CD4-positive, alpha-beta T cell (primary cell): ENCODE measurements at regions of chr12 and their contacts with region 1.

Region 1: DNA sequence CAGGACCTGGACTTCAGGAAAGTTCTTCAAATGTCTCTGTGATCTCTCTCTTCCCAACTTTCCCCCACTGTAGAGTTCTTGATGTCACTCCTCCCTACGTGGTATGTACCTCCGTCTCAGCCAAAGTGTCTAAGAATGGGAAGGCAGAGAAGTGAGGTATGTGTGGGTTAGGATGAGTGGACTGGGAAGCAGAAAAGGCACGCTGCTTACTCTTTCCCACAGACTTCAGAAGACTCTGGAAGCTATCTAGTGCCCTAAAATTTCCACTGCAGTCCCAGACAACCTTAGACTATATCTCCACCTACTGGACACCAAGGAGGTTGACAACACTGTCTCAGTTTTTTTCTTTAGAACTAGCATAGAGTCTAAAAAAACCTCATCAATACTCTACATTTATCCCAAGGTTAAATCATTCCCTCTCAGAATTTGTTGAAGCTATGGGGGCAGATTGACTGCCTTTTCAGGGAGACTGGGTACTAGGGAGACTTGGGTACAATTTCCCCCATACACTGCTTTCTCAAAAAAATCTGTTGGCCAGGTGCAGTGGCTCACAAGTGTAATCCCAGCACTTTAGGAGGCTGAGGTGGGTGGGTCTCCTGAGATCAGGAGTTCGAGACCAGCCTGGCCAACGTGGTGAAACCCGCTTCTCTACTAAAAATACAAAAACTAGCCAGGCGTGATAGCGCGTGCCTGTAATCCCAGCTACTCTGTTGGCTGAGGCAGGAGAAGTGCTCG is 20.6 kb upstream of the ITGA5 start:
- DNase-seq: peak in 3 of 14 experiments; percentile 61 to 76 (median 75)
- ATAC-seq: peak; percentile 97
- H3K4me3 ChIP-seq: no peak overlapping the region
- H3K4me3 Mint-ChIP-seq: no peak overlapping the region
- H3K27ac ChIP-seq: no peak overlapping the region
- H3K27ac Mint-ChIP-seq: no peak overlapping the region
- H3K4me1 ChIP-seq: peaks cover 4% of the 10 kb centered on the region
- H3K4me1 Mint-ChIP-seq: peaks cover 5% of the 10 kb centered on the region
- H3K27me3 ChIP-seq: no peaks in the 10 kb centered on the region
- H3K27me3 Mint-ChIP-seq: peaks cover 6% of the 10 kb centered on the region
- CTCF ChIP-seq: peak; percentile 87

Region 2: GRCh38 chr12:54285150-54286041 is 154.3 kb before region 1 on chr12:
- CTCF ChIA-PET with region 1: no interaction called
- POLR2A ChIA-PET with region 1: no interaction called
- intact Hi-C with region 1: loop called in 1 of 2 experiments (anchors 5 kb)
- DNase-seq: no peak
- ATAC-seq: no peak
- H3K4me3 ChIP-seq: no peak overlapping the region
- H3K4me3 Mint-ChIP-seq: peak overlapping the region; percentile 68
- H3K27ac ChIP-seq: no peak overlapping the region
- H3K27ac Mint-ChIP-seq: peak overlapping the region; percentile 41
- H3K4me1 ChIP-seq: peaks cover 41% of the 10 kb centered on the region
- H3K4me1 Mint-ChIP-seq: no peaks in the 10 kb centered on the region
- H3K27me3 ChIP-seq: no peaks in the 10 kb centered on the region
- H3K27me3 Mint-ChIP-seq: no peaks in the 10 kb centered on the region
- CTCF ChIP-seq: peak; percentile 40

Region 3: GRCh38 chr12:54404061-54405004 is 35.4 kb before region 1 on chr12:
- CTCF ChIA-PET with region 1: interaction called, 153 read pairs
- POLR2A ChIA-PET with region 1: interaction called, 61 read pairs
- intact Hi-C with region 1: loop called (anchors 1 kb)
- DNase-seq: peak; percentile 55 to 85 (median 64)
- ATAC-seq: peak; percentile 68
- H3K4me3 ChIP-seq: no peak overlapping the region
- H3K4me3 Mint-ChIP-seq: no peak overlapping the region
- H3K27ac ChIP-seq: peak overlapping the region; percentile 29 to 52
- H3K27ac Mint-ChIP-seq: peak overlapping the region; percentile 86
- H3K4me1 ChIP-seq: peaks cover 46% of the 10 kb centered on the region
- H3K4me1 Mint-ChIP-seq: peaks cover 50% of the 10 kb centered on the region
- H3K27me3 ChIP-seq: no peaks in the 10 kb centered on the region
- H3K27me3 Mint-ChIP-seq: no peaks in the 10 kb centered on the region
- CTCF ChIP-seq: peak; percentile 99

Region 4: DNA sequence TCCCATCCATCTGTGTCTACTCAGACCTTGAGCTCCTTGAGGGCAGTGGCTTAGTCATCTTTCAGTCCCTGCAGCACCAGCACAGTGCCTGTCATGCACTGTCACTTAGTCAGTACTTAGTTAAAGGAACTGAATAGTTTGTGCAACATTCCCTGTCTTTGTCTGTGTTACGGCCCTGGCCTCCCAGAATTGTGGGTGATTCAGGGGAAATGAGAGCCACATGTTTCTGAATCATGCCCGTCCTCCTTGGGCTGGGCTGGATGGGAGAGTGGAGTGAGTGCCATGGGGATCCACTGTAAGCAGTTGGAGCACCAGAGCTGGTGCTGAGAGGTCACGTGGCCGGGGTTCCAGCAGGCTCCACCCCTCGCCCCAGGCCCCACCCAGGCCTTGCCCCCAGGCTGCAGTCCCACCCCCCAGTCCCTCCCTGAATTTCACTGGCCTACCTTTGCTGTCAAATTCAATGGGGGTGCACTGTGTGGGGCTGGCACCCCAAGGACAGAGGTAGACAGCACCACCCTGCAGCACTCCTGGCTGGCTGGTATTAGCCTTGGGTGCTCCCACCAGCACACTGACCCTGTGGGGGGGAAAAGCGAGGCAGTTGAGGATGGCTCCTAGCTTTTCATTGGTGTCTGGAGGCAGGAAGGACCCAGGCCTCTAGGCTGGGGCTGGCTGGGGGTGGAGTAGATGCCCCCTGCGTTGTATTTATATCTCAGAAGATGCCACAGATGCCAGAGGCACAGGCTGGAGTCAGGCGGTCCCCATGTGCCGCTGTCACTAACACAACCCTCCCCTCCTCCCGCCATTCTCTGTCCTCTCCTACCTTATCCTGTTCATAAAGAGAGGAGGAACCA is 28.1 kb before region 1 on chr12:
- CTCF ChIA-PET with region 1: interaction called, 11 read pairs
- POLR2A ChIA-PET with region 1: interaction called, 6 read pairs
- intact Hi-C with region 1: no loop called
- DNase-seq: peak in 13 of 14 experiments; percentile 45 to 83 (median 68)
- ATAC-seq: peak; percentile 46
- H3K4me3 ChIP-seq: peak overlapping the region; percentile 50
- H3K4me3 Mint-ChIP-seq: peak overlapping the region; percentile 78
- H3K27ac ChIP-seq: peak overlapping the region; percentile 94 to 99
- H3K27ac Mint-ChIP-seq: peak overlapping the region; percentile 95
- H3K4me1 ChIP-seq: peaks cover 91% of the 10 kb centered on the region
- H3K4me1 Mint-ChIP-seq: peaks cover 79% of the 10 kb centered on the region
- H3K27me3 ChIP-seq: no peaks in the 10 kb centered on the region
- H3K27me3 Mint-ChIP-seq: no peaks in the 10 kb centered on the region
- CTCF ChIP-seq: no peak

Region 5: GRCh38 chr12:54419088-54419892 is 20.4 kb before region 1 on chr12 and contains the start of gene ITGA5:
- CTCF ChIA-PET with region 1: interaction called, 11 read pairs
- POLR2A ChIA-PET with region 1: interaction called, 3 read pairs
- intact Hi-C with region 1: no loop called
- DNase-seq: peak in 8 of 14 experiments; percentile 25 to 72 (median 55)
- ATAC-seq: peak; percentile 25
- H3K4me3 ChIP-seq: peak within 1 kb of the TSS; percentile 98
- H3K4me3 Mint-ChIP-seq: peak within 1 kb of the TSS; percentile 94
- H3K27ac ChIP-seq: peak within 1 kb of the TSS; percentile 90 to 94
- H3K27ac Mint-ChIP-seq: peak within 1 kb of the TSS; percentile 95
- H3K4me1 ChIP-seq: peaks cover 55% of the 10 kb centered on the region
- H3K4me1 Mint-ChIP-seq: peaks cover 54% of the 10 kb centered on the region
- H3K27me3 ChIP-seq: no peaks in the 10 kb centered on the region
- H3K27me3 Mint-ChIP-seq: no peaks in the 10 kb centered on the region
- CTCF ChIP-seq: no peak
- total RNA-seq, gene ITGA5: 143 to 159 TPM